Gastrocnemius medialis (tissue), 4 donors: ENCODE measurements at regions of chr1 and their contacts with region 1.

Region 1: GRCh38 chr1:108691942-108692723 is at the start of gene PRPF38B:
- DNase-seq: peak; percentile 93
- ATAC-seq: peak; percentile 94 to 95
- H3K4me3 ChIP-seq: peak within 1 kb of the TSS; percentile 83 to 97 (median 91)
- H3K27ac ChIP-seq: peak within 1 kb of the TSS; percentile 95 to 99 (median 96)
- H3K4me1 ChIP-seq: peaks cover 32 to 36% of the 10 kb centered on the region in 2 donors
- H3K27me3 ChIP-seq: no peaks in the 10 kb centered on the region
- CTCF ChIP-seq: no peak
- POLR2A ChIP-seq: peak; percentile 91
- total RNA-seq, gene PRPF38B: 13.8 to 17.1 (median 15.7) TPM

Region 2: DNA sequence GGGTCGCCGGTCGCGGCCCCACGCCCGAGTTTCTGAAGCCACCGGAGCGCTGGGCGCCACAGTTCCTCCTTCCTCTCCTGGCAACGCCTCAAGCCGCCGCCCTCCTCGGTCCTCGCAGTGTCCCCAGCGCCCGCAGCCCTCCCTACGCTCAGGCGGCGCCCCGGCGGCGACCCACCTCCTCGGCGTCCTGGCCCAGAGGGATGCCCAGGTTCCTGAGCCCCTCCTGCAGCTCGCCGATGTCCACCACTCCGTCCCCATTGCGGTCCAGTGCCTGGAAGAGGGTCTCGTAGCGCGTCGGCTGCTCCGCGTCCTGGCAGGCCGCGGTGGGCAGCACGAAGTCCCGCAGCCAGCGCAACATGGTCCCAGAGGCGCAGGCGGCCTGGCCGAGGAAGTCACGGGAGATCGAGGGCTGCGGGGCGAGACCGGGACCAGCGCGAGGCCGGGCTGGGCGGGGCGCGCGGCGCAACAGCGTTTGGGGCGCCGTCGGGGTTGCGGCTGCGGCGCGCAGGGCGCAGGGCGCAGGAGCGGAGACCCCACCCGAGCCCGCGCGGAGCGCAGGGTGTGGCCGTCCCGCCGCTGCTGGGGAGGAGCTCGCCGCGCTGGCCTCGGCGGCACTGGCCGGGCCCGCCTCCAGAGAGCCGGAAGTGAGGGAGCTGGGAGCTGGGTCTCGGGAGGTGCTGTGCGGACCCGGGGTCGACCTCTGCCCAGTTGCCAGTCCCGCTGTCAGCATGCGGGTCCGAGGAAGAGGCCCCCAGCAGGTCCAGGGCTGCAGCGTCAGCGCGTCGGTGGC is 492.2 kb before region 1 on chr1 and contains the start of gene SLC25A24:
- in situ Hi-C with region 1: loop called in 2 of 4 experiments (anchors 25 kb)
- intact Hi-C with region 1: no loop called
- DNase-seq: peak; percentile 61 to 70
- ATAC-seq: peak; percentile 84
- H3K4me3 ChIP-seq: peak within 1 kb of the TSS; percentile 84 to 97 (median 88)
- H3K27ac ChIP-seq: peak within 1 kb of the TSS; percentile 89 to 97 (median 92)
- H3K4me1 ChIP-seq: peaks cover 19 to 20% of the 10 kb centered on the region in 2 donors
- H3K27me3 ChIP-seq: no peaks in the 10 kb centered on the region
- CTCF ChIP-seq: no peak
- POLR2A ChIP-seq: peak; percentile 63 to 67
- total RNA-seq, gene SLC25A24: 6.8 to 12.3 (median 9.3) TPM

Region 3: DNA sequence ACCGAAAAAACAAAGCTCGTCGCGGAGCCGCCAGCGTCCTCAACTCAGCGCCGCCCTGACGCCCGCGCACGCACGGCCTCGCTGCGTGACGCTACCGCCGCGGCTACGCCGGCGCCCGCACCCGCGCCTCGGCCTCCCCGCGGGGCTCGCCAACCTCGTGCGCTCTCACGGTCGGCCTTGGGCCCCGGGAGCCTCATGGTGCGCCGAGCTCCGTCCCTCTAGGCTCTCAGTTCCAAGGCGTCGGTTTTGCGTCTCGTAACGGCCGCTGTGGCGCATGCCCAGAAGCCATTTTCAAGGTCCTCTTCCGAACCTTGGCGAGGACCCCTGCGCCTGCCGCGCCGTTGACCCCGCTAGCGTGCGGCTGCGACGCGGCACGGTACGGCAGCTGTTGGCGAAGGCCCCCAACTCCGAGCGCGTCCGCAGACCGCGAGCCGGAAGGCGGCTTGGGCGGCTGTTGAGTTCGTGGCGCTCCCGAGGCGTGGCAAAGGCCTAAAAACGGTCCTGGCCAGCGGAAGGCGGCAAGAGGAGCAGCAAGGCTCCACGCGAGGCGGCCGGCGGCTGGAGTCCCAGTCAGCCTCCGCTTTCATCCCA is 31.0 kb before region 1 on chr1 and contains the start of gene HENMT1:
- in situ Hi-C with region 1: no loop called
- intact Hi-C with region 1: loop called (anchors 2 kb)
- DNase-seq: peak; percentile 6 to 37
- ATAC-seq: peak; percentile 73 to 83
- H3K4me3 ChIP-seq: peak within 1 kb of the TSS; percentile 71 to 90 (median 76)
- H3K27ac ChIP-seq: peak within 1 kb of the TSS; percentile 76 to 90 (median 77)
- H3K4me1 ChIP-seq: peaks cover 4 to 5% of the 10 kb centered on the region in 2 donors
- H3K27me3 ChIP-seq: no peaks in the 10 kb centered on the region
- CTCF ChIP-seq: no peak
- POLR2A ChIP-seq: peak in 1 of 2 donors; percentile 8
- total RNA-seq, gene HENMT1: 0.51 to 3.5 (median 1.8) TPM

Region 4: GRCh38 chr1:108897865-108898720 is 206.0 kb after region 1 on chr1:
- in situ Hi-C with region 1: no loop called
- intact Hi-C with region 1: loop called (anchors 5 kb)
- DNase-seq: no peak
- ATAC-seq: peak; percentile 70
- H3K4me3 ChIP-seq: no peak overlapping the region
- H3K27ac ChIP-seq: peak overlapping the region in 1 of 4 donors; percentile 62
- H3K4me1 ChIP-seq: peaks cover 5 to 8% of the 10 kb centered on the region in 2 donors
- H3K27me3 ChIP-seq: no peaks in the 10 kb centered on the region
- CTCF ChIP-seq: peak; percentile 48 to 87 (median 74)
- POLR2A ChIP-seq: no peak

Region 5: DNA sequence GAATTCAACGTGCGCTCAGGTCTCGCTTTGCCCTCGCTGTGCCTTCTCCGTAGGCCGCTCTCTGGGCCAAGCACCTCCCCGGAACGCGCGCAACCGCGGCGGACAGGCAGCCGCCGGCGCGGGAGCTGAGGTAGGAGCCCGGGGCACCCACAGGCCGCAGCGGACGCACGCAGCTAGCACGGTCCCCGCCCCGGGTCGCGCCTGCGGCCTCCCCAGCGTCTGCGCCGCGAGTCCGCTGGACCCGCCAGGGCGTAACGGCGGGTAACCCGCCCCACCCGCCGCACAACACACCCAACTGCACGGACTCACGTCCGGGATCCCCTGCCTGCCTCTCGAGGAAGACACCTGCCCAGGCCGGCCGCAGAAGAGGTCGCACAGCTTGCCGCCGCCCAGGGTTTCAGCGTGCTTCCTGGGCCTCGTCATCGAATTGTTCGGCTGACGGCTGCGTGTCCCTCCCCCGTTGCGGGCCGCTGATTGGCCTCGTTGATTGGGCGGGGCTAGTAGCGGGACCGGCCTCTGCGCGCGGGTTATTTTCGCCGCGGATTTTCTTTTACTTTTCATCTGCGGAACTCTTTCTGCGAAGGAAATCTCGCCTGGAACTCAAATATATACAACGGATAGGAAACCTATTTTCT is 271.0 kb after region 1 on chr1 and contains the start of gene CLCC1:
- in situ Hi-C with region 1: no loop called
- intact Hi-C with region 1: loop called (anchors 1 kb)
- DNase-seq: peak; percentile 92
- ATAC-seq: peak; percentile 98
- H3K4me3 ChIP-seq: peak within 1 kb of the TSS; percentile 65 to 85 (median 69)
- H3K27ac ChIP-seq: peak within 1 kb of the TSS; percentile 88 to 96 (median 91)
- H3K4me1 ChIP-seq: peaks cover 10 to 13% of the 10 kb centered on the region in 2 donors
- H3K27me3 ChIP-seq: no peaks in the 10 kb centered on the region
- CTCF ChIP-seq: no peak
- POLR2A ChIP-seq: peak; percentile 86 to 92
- total RNA-seq, gene CLCC1: 24.1 to 32.4 (median 28.5) TPM